Posterior vena cava (tissue), 2 donors: ENCODE measurements at regions of chr16 and their contacts with region 1.

Region 1: GRCh38 chr16:82156761-82157532 is 13.1 kb downstream of the MPHOSPH6 start:
- DNase-seq: no peak

Region 2: DNA sequence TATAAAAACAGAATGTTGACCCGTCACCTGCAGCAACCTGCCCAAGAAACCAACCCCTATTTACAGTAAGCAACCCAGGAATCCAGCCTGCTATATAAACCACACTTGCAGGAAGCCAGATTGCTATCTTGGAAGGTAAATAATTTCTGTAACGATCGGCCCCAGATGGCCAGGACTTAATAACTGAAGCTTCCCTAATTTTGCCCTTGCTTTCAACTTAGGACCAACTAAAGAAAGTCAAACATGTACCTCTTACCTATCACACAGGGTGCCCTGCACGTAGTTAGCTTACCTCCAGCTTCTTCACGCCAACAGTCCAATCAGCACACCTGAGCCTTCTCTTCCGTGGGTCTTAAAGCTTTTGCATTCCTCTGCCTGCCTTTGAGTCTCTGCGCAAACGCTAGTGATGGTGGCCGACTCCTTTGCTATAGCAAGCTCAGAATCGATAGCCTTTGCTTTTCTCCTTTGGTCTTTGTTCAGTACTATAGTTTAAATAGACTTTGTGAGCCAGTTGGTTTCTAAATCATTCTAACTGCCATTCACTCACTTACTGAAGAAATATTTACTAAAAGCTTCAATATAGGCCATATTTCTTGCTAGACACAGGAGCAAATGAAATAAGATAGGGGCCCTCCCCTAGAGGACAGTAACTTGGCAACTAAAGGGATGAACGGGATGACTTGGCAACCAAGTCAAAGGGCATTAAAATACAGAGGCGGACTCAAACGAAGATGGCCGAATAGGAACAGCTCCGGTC is 18.2 kb before region 1 on chr16:
- intact Hi-C with region 1: loop called in 1 of 2 experiments (anchors 1 kb)
- DNase-seq: no peak

Region 3: GRCh38 chr16:82603784-82604411 is 447.0 kb after region 1 on chr16:
- intact Hi-C with region 1: no loop called
- DNase-seq: no peak